ENCODE measurements at regions of chr14 and their contacts with region 1.

Region 1: GRCh38 chr14:21383848-21384493 is at the start of gene SUPT16H:
- DNase-seq: peak; percentile 93 to 96 (median 94)
- H3K4me3 ChIP-seq: peak within 1 kb of the TSS; percentile 81 to 86 (median 81)
- H3K4me3 Mint-ChIP-seq: peak within 1 kb of the TSS; percentile 100
- H3K27ac ChIP-seq: peak within 1 kb of the TSS; percentile 91
- H3K27ac Mint-ChIP-seq: peak within 1 kb of the TSS; percentile 98 to 100 (median 99)
- H3K4me1 ChIP-seq: peaks cover 21 to 28% of the 10 kb centered on the region in 2 donors
- H3K4me1 Mint-ChIP-seq: peaks cover 27% of the 10 kb centered on the region
- H3K27me3 ChIP-seq: no peaks in the 10 kb centered on the region
- H3K27me3 Mint-ChIP-seq: peaks cover 0 to 3% (median 0%) of the 10 kb centered on the region in 3 donors
- CTCF ChIP-seq: no peak
- polyA plus RNA-seq, gene SUPT16H: 15.7 to 37.3 (median 26.6) TPM

Region 2: GRCh38 chr14:21241218-21241819 is 142.7 kb before region 1 on chr14:
- intact Hi-C with region 1: loop called (anchors 5 kb)
- DNase-seq: peak in 2 of 3 donors; percentile 25 to 40
- H3K4me3 ChIP-seq: no peak overlapping the region
- H3K4me3 Mint-ChIP-seq: no peak overlapping the region
- H3K27ac ChIP-seq: peak overlapping the region in 1 of 2 donors; percentile 10
- H3K27ac Mint-ChIP-seq: peak overlapping the region in 3 of 7 donors; percentile 58 to 69 (median 60)
- H3K4me1 ChIP-seq: peaks cover 13 to 21% of the 10 kb centered on the region in 2 donors
- H3K4me1 Mint-ChIP-seq: peaks cover 25% of the 10 kb centered on the region
- H3K27me3 ChIP-seq: no peaks in the 10 kb centered on the region
- H3K27me3 Mint-ChIP-seq: peaks cover 0 to 3% (median 0%) of the 10 kb centered on the region in 3 donors
- CTCF ChIP-seq: peak; percentile 75

Region 3: DNA sequence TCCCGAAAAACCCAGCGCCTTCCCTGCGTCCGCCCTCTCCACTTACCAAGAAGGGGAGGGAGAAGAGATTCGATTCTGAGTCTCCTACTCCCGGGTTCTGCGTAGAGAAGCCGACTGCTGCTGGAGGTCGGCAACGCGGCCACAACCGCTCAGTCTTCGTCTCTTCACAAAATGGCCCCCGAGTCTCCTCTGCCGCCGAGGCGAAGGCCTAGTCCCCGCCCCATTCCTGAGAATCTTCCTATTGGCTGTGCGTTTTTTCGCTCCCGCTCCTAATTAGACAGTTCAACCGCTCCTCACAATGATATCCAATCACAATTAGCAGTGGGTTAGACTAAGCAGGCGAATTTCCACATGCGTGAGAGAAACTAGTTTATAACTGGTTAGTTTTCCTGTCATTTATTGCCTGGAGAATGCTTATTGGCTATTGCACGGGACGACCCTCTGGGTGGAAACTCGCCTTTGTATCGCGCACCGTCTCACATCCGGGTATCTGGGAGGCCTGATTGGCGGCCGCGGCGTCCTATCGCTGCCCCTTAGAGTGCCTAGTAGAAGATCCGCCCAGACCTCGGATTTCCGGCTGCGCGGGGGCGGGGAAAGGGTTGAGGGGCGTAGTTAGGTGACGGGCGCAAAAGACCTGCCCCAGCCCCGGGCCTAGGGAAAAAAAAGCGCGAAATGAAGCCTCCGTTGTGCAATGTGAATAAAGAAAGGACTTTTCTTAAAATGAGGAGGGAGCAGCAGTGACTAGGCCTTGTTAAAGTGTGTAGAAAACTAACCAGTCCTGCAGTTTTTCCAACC is 114.5 kb before region 1 on chr14 and contains the start of gene HNRNPC:
- intact Hi-C with region 1: loop called in 1 of 2 experiments (anchors 2 kb)
- DNase-seq: peak; percentile 99 to 100 (median 99)
- H3K4me3 ChIP-seq: peak within 1 kb of the TSS; percentile 95 to 98 (median 97)
- H3K4me3 Mint-ChIP-seq: peak within 1 kb of the TSS; percentile 100
- H3K27ac ChIP-seq: peak within 1 kb of the TSS; percentile 94 to 99
- H3K27ac Mint-ChIP-seq: peak within 1 kb of the TSS; percentile 100
- H3K4me1 ChIP-seq: peaks cover 45 to 55% of the 10 kb centered on the region in 2 donors
- H3K4me1 Mint-ChIP-seq: peaks cover 44% of the 10 kb centered on the region
- H3K27me3 ChIP-seq: no peaks in the 10 kb centered on the region
- H3K27me3 Mint-ChIP-seq: peaks cover 0 to 3% (median 0%) of the 10 kb centered on the region in 3 donors
- CTCF ChIP-seq: no peak
- polyA plus RNA-seq, gene HNRNPC: 391 to 609 (median 580) TPM

Region 4: GRCh38 chr14:21437063-21437901 is 53.3 kb after region 1 on chr14:
- intact Hi-C with region 1: loop called in 1 of 2 experiments (anchors 10 kb)
- DNase-seq: peak; percentile 97 to 98 (median 97)
- H3K4me3 ChIP-seq: peak overlapping the region; percentile 79 to 94 (median 93)
- H3K4me3 Mint-ChIP-seq: peak overlapping the region; percentile 85 to 86
- H3K27ac ChIP-seq: peak overlapping the region; percentile 87 to 96
- H3K27ac Mint-ChIP-seq: peak overlapping the region; percentile 82 to 97 (median 91)
- H3K4me1 ChIP-seq: peaks cover 17 to 29% of the 10 kb centered on the region in 2 donors
- H3K4me1 Mint-ChIP-seq: peaks cover 35% of the 10 kb centered on the region
- H3K27me3 ChIP-seq: no peaks in the 10 kb centered on the region
- H3K27me3 Mint-ChIP-seq: no peaks in the 10 kb centered on the region
- CTCF ChIP-seq: no peak

Measured in CD14-positive monocyte (primary cell).